Pancreas (tissue), 10 donors: ENCODE measurements at regions of chr10 and their contacts with region 1.

Region 1: GRCh38 chr10:60444494-60445064 is 54.9 kb upstream of the ANK3 start:
- DNase-seq: no peak
- ATAC-seq: peak in 1 of 4 donors; percentile 33
- H3K4me3 ChIP-seq: no peak overlapping the region
- H3K27ac ChIP-seq: no peak overlapping the region
- H3K4me1 ChIP-seq: peaks cover 7 to 16% (median 9%) of the 10 kb centered on the region in 3 donors
- H3K27me3 ChIP-seq: no peaks in the 10 kb centered on the region
- CTCF ChIP-seq: peak in 3 of 4 donors; percentile 17 to 34 (median 19)

Region 2: GRCh38 chr10:60646966-60647796 is 202.6 kb after region 1 on chr10:
- intact Hi-C with region 1: loop called in 2 of 3 experiments (anchors 5 to 10 kb)
- DNase-seq: peak in 2 of 6 donors; percentile 9 to 34
- ATAC-seq: peak; percentile 70 to 85 (median 84)
- H3K4me3 ChIP-seq: no peak overlapping the region
- H3K27ac ChIP-seq: no peak overlapping the region
- H3K4me1 ChIP-seq: peaks cover 0 to 5% (median 0%) of the 10 kb centered on the region in 3 donors
- H3K27me3 ChIP-seq: no peaks in the 10 kb centered on the region
- CTCF ChIP-seq: peak; percentile 35 to 68 (median 62)